Dendritic cell treated with granulocyte-macrophage colony-stimulating factor and Interleukin-4, amounts not matched to agents 40 ng/mL and 50 ng/mL, for 4 days (primary cell): ENCODE measurements at regions of chr12 and their contacts with region 1.

Region 1: GRCh38 chr12:13255792-13256691 is 59.5 kb downstream of the EMP1 start:
- H3K4me3 Mint-ChIP-seq: peak overlapping the region; percentile 56
- H3K27ac Mint-ChIP-seq: no peak overlapping the region
- H3K4me1 Mint-ChIP-seq: peaks cover 25% of the 10 kb centered on the region
- H3K27me3 Mint-ChIP-seq: peaks cover 6% of the 10 kb centered on the region

Region 2: DNA sequence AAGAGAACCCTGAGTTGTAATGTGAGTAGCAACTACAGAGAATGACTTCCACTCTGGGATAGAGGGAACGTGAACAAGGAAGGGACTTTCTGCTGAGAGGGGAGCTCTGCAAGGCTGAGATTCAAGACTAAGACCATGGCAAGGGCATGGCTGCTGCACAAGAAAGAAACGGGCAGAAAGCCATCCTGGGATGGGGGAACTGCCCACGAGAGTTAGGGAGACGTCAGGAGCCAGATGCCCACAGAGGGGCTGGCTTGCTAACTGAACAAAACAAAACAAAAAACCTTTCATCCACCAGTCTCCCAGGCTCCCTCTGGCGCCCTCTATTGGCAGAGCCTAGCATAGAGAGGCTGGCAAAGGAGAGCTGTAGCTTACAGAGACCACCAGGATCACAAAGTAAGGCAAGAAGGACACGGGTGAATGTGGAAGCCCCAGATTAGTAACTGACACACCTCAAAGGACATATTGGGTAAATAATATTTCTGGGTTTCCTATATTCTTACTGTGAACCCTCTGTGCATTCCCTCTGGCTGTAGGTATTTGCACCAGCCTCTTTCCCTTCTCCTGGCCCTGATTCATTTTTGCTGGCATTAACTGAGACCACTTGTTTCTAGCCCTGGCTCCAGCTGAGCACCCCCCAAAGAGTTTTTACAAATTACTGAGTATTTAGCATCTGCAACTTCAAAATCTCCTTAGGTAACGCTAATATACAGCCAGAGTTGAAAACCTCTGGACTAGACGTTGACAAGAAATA is 278.8 kb after region 1 on chr12:
- intact Hi-C with region 1: loop called (anchors 10 kb)
- H3K4me3 Mint-ChIP-seq: no peak overlapping the region
- H3K27ac Mint-ChIP-seq: no peak overlapping the region
- H3K4me1 Mint-ChIP-seq: no peaks in the 10 kb centered on the region
- H3K27me3 Mint-ChIP-seq: no peaks in the 10 kb centered on the region

Region 3: DNA sequence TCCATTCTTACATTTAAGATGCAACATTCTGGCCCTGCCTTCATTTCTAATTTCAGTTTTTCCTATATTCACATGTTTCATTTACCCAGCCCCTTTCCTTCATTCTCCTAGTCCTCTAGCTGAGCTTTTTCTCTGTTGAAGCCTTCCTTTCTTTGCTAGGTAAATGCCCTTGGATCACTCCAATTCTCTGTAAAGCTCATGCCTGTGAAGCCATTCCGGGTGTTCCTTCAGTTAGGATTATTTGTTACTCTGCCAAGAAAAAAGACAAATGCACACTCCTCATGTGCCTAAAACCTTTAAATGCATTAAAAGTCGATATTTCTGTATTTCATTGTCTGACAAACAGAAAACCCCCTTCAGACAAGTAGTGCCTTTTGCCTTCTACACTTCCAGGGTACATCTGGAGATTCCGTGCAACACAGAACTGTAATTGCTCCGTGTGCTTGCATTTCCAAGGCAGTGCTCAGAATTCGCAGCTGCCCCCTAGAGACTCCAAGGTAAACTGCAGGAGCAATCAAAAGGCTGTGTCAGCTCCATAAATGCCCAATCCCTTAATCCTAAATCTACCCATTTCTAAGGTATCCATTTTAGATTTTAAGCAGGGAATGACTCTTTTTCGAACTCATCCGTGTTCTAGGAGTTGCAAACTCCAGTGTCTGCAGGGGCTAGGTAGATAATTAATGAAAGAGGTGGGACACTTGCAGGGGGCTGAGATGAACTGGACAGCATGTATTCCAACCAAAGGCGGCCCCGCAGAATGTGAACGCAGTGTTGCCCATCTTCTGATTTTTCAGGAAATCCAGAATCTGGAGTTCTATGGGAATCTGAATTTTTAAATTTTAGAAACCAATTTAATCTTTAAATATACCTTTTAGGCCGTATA is 405.2 kb after region 1 on chr12:
- intact Hi-C with region 1: loop called (anchors 10 kb)
- H3K4me3 Mint-ChIP-seq: no peak overlapping the region
- H3K27ac Mint-ChIP-seq: no peak overlapping the region
- H3K4me1 Mint-ChIP-seq: peaks cover 5% of the 10 kb centered on the region
- H3K27me3 Mint-ChIP-seq: peaks cover 2% of the 10 kb centered on the region

Region 4: DNA sequence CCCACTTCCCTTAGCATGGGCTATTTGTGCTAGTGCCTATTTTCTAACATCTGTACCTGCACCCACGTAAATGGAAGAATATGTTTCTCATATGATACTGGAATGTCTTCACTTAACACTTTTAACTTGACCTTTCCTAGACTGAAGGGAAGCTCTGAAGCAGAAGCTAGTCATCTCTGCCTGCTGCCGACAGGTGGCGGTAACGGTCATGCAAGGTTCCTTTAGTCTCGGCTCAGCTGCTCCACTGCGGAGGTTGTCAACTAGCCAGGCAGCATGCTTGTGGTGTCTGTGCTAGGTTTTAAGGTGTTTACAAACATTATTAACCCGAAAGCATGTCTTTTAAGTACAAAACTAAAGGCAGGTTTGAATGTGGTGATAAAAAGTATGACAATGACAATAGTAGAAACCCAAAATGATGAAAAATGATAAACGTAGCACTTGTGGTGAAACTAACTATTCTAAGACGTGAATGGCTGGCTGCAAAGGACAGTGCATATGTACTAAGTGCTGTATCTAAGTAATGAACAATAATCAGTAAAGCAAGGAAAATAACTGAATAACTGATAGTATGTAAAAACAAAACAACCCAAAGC is 608.1 kb after region 1 on chr12:
- intact Hi-C with region 1: loop called (anchors 5 kb)
- H3K4me3 Mint-ChIP-seq: no peak overlapping the region
- H3K27ac Mint-ChIP-seq: no peak overlapping the region
- H3K4me1 Mint-ChIP-seq: no peaks in the 10 kb centered on the region
- H3K27me3 Mint-ChIP-seq: peaks cover 3% of the 10 kb centered on the region

Region 5: DNA sequence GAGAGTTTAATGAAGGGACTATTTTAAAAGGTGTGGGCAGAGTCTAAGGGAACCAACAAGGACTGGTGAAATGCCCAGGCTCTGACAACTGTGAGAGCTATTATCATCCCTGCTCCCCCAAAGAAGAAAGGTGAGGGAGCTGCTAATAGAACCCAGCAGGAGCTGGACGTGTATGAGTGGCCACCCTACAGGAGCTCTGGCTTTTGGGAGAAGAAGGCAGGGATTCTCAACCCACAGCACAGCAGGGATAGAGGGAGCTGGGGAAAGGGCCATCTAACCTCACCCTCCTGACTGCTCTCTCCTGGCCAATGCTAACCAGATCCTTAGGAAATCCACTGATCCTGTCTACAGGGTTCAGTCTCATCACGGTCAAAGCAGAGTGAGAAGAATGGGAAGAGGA is 668.2 kb after region 1 on chr12:
- intact Hi-C with region 1: no loop called
- H3K4me3 Mint-ChIP-seq: no peak overlapping the region
- H3K27ac Mint-ChIP-seq: no peak overlapping the region
- H3K4me1 Mint-ChIP-seq: no peaks in the 10 kb centered on the region
- H3K27me3 Mint-ChIP-seq: no peaks in the 10 kb centered on the region